ENCODE measurements at regions of chr5 and their contacts with region 1.

Region 1: DNA sequence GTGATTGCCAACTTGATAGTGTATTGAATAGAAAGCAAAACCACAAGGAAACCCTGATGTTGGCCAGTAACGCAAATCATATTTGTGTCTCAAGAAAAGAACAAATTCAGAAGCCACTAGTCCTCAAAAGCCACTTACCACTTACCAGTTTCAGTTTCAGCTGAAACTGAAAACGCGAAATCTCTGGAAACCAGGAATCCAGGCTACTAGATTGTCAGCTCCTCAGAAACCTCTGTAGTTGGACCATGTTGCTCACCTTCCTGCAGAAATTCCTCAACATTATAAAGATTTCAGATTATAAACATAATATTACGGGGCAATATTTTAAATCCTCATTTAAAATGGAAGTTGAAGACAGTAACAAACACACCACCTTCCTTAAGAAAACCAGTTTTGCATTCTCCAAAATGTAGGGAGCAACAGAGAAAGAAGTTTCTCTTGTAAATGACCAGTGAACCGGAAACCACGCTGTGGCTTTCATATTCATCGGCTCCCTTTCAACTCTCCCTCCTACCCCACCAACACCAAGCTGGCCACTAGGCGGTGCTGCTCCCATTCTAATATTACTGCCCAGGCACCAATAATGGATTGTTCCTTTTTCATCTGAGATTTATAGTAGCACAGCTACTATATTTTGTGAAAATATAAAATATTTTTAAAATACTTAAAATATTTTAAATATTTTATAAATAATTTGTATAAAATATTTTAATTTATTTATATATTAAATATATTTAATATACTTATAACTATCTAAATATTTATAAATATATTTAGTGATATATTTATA is 8.7 kb upstream of the TMED7 start:
- DNase-seq: peak; percentile 81 to 89 (median 84)
- ATAC-seq: peak; percentile 99
- H3K4me3 ChIP-seq: no peak overlapping the region
- H3K27ac ChIP-seq: peak overlapping the region; percentile 8; the same call in 1 of the 3 replicates
- H3K4me1 ChIP-seq: peaks cover 0 to 4% of the 10 kb centered on the region in 2 experiments; a peak in 1 of 5 replicates
- H3K27me3 ChIP-seq: peaks cover 0 to 2% of the 10 kb centered on the region in 2 experiments; a peak in 2 of 5 replicates
- CTCF ChIP-seq: peak; percentile 86 to 94 (median 89)
- EP300 ChIP-seq: no peak
- POLR2A ChIP-seq: no peak
- RAD21 ChIP-seq: peak; percentile 85 to 89

Region 2: GRCh38 chr5:115419846-115420585 is 214.5 kb before region 1 on chr5:
- CTCF ChIA-PET with region 1: no interaction called
- POLR2A ChIA-PET with region 1: no interaction called
- in situ Hi-C with region 1: no loop called
- intact Hi-C with region 1: no loop called
- DNase-seq: no peak
- ATAC-seq: no peak
- H3K4me3 ChIP-seq: no peak overlapping the region
- H3K27ac ChIP-seq: no peak overlapping the region
- H3K4me1 ChIP-seq: no peaks in the 10 kb centered on the region
- H3K27me3 ChIP-seq: no peaks in the 10 kb centered on the region; a peak in 1 of 5 replicates
- CTCF ChIP-seq: no peak
- EP300 ChIP-seq: no peak
- POLR2A ChIP-seq: no peak
- RAD21 ChIP-seq: no peak

Region 3: DNA sequence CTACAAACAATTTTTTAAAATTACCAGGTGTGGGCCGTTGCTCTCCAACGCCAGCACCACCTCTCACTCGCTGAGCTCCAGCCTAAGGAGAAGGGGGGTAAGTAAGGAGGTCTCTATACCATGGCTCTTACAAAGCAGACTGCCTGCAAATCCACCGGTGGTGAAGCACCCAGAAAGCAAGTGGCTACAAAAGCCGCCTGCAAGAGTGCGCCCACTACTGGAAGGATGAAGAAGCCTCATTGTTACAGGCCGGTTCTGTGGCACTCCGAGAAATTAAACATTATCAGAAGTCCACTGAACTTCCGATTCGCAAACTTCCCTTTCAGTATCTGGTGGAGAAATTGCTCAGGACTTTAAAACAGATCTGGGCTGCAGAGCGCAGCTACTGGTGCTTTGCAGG is 135.9 kb after region 1 on chr5:
- CTCF ChIA-PET with region 1: no interaction called
- POLR2A ChIA-PET with region 1: no interaction called
- in situ Hi-C with region 1: no loop called
- intact Hi-C with region 1: loop called (anchors 1 kb)
- DNase-seq: peak; percentile 18 to 53 (median 30)
- ATAC-seq: peak; percentile 95
- H3K4me3 ChIP-seq: no peak overlapping the region
- H3K27ac ChIP-seq: no peak overlapping the region
- H3K4me1 ChIP-seq: no peaks in the 10 kb centered on the region
- H3K27me3 ChIP-seq: 0 out of 5 replicates have a peak, but pooled peaks cover 0 to 3% of the 10 kb centered on the region in 2 experiments
- CTCF ChIP-seq: peak; percentile 72 to 73 (median 73)
- EP300 ChIP-seq: no peak
- POLR2A ChIP-seq: no peak
- RAD21 ChIP-seq: peak; percentile 25 to 52; a peak in 3 of 4 replicates

Region 4: DNA sequence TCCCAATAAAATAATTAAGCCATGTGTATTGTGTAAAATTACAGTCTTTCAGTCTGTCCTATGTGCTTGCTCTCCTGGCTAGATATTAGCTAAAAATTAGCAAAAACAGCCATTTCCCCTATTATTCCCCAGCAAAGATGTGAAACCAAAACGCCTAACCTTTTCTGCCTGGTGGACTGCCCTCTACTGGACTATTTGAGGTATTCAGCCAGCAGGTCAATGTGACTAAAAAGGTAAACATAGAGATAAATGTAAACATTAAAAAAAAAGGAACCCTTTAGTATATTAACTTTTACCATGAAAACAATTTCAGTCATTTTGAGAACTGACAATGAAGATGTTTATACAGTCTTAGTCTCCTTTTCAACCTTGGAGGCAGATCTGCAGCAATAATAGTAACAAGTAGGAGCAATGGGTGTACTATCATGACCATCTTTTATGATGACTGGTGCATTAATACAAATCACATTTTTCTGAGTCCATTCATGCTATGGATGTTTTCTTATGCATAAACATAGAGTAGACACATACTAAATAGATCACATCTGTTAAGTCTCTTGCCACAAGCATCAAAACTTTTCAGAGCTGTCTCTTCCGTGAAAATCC is 196.7 kb after region 1 on chr5:
- CTCF ChIA-PET with region 1: no interaction called
- POLR2A ChIA-PET with region 1: no interaction called
- in situ Hi-C with region 1: loop called (anchors 5 kb)
- intact Hi-C with region 1: loop called (anchors 2 kb)
- DNase-seq: peak; percentile 37 to 53 (median 42)
- ATAC-seq: peak; percentile 85
- H3K4me3 ChIP-seq: no peak overlapping the region
- H3K27ac ChIP-seq: no peak overlapping the region
- H3K4me1 ChIP-seq: no peaks in the 10 kb centered on the region
- H3K27me3 ChIP-seq: no peaks in the 10 kb centered on the region
- CTCF ChIP-seq: peak; percentile 54 to 66 (median 65)
- EP300 ChIP-seq: no peak
- POLR2A ChIP-seq: no peak
- RAD21 ChIP-seq: peak; percentile 19 to 36; a peak in 3 of 4 replicates

Region 5: GRCh38 chr5:116281309-116281708 is 646.8 kb after region 1 on chr5:
- CTCF ChIA-PET with region 1: no interaction called
- POLR2A ChIA-PET with region 1: no interaction called
- in situ Hi-C with region 1: no loop called
- intact Hi-C with region 1: loop called (anchors 5 kb)
- DNase-seq: no peak
- ATAC-seq: no peak
- H3K4me3 ChIP-seq: no peak overlapping the region
- H3K27ac ChIP-seq: no peak overlapping the region
- H3K4me1 ChIP-seq: no peaks in the 10 kb centered on the region
- H3K27me3 ChIP-seq: no peaks in the 10 kb centered on the region
- CTCF ChIP-seq: no peak
- EP300 ChIP-seq: no peak
- POLR2A ChIP-seq: no peak
- RAD21 ChIP-seq: no peak